K562 (cell line): ENCODE measurements at regions of chr6 and their contacts with region 1.

Region 1: DNA sequence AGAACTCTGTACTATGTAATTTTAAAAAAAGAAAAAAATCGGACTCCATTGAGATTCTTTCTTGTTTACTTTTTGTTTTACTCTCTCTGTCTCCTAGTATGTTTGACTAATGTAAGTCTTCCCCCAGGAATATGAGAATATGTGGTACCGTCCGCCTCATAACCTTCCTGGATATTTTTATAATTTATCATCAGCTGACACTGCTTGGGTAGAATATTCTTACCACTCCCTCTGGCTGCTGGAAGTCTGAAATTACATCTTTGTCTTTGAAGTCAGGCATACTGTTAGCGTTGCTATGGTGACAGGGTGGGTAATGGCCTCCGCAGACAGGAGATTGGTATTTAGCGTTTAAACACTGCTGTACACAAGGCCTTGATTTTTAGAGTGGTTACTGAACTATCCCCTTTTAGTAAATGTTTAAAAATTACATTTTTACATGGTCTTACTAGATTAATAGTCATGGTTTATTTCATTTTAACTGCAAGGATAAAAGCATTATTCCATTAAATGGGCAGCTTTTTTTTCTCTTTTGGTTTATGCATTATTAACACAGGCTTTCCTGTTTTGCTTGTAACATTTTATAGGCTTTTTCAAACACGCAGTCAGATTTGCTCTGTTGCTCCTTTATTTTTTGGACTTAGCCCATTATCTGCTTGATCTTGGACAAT is 176.4 kb downstream of the ARID1B start:
- DNase-seq: peak; percentile 43 to 75 (median 62)
- ATAC-seq: peak; percentile 83
- H3K4me3 ChIP-seq: no peak overlapping the region
- H3K27ac ChIP-seq: no peak overlapping the region
- H3K4me1 ChIP-seq: peaks cover 7 to 11% of the 10 kb centered on the region in 2 experiments; a peak in 3 of 5 replicates
- H3K27me3 ChIP-seq: no peaks in the 10 kb centered on the region; a peak in 1 of 5 replicates
- CTCF ChIP-seq: peak in 1 of 3 experiments; percentile 44; a peak in 2 of 6 replicates
- EP300 ChIP-seq: no peak
- POLR2A ChIP-seq: no peak
- RAD21 ChIP-seq: peak; percentile 17 to 55; a peak in 3 of 4 replicates

Region 2: DNA sequence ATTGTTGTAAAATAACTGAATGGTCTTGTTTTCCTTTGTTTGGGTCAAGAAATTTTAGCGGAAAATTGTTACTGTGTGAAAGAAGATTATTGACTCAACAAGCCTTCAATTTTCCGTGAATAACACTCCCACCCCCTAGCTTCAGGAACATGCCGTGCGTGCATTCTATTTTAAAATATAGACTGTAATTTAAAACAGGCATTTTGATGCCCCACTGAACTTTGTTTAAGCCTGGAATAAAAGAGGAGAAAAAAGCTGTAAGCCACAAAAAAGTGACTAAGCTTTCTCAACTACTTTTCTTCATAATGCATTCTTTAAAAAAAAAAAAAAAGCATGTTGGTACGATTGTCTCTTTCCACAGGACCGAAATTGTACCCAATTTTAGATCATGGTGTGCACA is 10.4 kb before region 1 on chr6:
- CTCF ChIA-PET with region 1: no interaction called
- POLR2A ChIA-PET with region 1: interaction called, 12 read pairs
- in situ Hi-C with region 1: no loop called
- intact Hi-C with region 1: no loop called
- DNase-seq: no peak
- ATAC-seq: no peak
- H3K4me3 ChIP-seq: no peak overlapping the region
- H3K27ac ChIP-seq: no peak overlapping the region
- H3K4me1 ChIP-seq: 0 out of 5 replicates have a peak, but pooled peaks cover 0 to 8% of the 10 kb centered on the region in 2 experiments
- H3K27me3 ChIP-seq: no peaks in the 10 kb centered on the region
- CTCF ChIP-seq: no peak
- EP300 ChIP-seq: no peak
- POLR2A ChIP-seq: no peak
- RAD21 ChIP-seq: no peak